GM10248 (cell line): ENCODE measurements at regions of chr20 and their contacts with region 1.

Region 1: GRCh38 chr20:40741507-40742106 is 52.6 kb upstream of the MAFB start:
- DNase-seq: peak; percentile 48
- CTCF ChIP-seq: peak; percentile 58

Region 2: GRCh38 chr20:40754339-40754943 is 12.8 kb after region 1 on chr20:
- CTCF ChIA-PET with region 1: interaction called, 47 read pairs
- POLR2A ChIA-PET with region 1: no interaction called
- DNase-seq: no peak
- CTCF ChIP-seq: no peak

Region 3: DNA sequence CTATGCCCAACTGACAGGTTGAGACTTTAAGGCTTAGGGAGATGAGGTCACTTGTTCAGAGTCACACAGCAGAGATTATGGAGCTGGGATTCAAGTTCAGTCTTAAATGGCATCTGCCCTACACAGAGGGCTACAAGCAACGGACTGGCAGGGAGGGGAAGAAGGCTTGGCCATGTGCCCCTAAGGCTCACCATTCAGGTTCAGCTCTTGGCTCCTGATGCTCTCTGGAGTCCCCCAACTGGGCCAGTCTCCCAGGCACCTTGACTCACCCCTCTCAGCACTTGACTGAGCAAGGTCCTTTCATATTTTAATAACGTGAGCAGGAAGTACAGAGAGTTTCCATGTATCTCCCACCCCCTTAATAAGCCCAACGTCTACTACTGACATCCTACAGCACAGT is 18.8 kb after region 1 on chr20:
- CTCF ChIA-PET with region 1: interaction called, 11 read pairs
- POLR2A ChIA-PET with region 1: no interaction called
- DNase-seq: no peak
- CTCF ChIP-seq: no peak